Mammary epithelial cell (primary cell): ENCODE measurements at regions of chr9 and their contacts with region 1.

Region 1: DNA sequence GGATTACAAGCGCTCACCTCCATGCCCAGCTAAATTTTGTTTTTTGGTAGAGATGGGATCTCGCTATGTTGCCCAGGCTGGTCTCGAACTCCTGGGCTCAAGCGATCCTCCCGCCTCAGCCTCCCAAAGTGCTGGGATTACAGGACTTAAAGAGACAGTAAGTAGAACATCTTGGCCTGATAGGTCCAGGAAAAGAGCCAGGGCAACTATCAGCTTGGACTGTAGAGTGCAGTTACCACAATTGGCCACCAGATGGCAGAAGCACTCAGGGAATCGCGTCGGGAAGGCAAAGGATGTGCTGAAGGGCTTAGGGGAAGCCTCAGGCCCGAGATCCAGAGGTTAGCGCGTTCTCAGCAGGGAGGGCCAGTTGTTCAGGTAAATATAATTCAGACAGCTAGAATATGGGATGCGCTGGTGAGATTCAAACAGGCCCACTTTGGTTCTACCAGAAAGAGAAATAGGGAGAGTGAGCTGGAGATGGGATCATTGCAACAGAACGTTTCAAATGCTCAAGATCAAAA is 21.5 kb downstream of the C9orf57 start:
- DNase-seq: peak; percentile 71
- H3K4me3 ChIP-seq: no peak overlapping the region
- H3K27ac ChIP-seq: no peak overlapping the region
- H3K4me1 ChIP-seq: no peaks in the 10 kb centered on the region
- H3K27me3 ChIP-seq: no peaks in the 10 kb centered on the region
- CTCF ChIP-seq: peak; percentile 96

Region 2: GRCh38 chr9:71806901-71807307 is 232.0 kb before region 1 on chr9:
- CTCF ChIA-PET with region 1: no interaction called
- dilution Hi-C with region 1: no loop called
- in situ Hi-C with region 1: no loop called
- intact Hi-C with region 1: loop called (anchors 1 kb)
- DNase-seq: peak; percentile 64
- H3K4me3 ChIP-seq: no peak overlapping the region
- H3K27ac ChIP-seq: no peak overlapping the region
- H3K4me1 ChIP-seq: no peaks in the 10 kb centered on the region
- H3K27me3 ChIP-seq: no peaks in the 10 kb centered on the region
- CTCF ChIP-seq: peak; percentile 97 to 99

Region 3: DNA sequence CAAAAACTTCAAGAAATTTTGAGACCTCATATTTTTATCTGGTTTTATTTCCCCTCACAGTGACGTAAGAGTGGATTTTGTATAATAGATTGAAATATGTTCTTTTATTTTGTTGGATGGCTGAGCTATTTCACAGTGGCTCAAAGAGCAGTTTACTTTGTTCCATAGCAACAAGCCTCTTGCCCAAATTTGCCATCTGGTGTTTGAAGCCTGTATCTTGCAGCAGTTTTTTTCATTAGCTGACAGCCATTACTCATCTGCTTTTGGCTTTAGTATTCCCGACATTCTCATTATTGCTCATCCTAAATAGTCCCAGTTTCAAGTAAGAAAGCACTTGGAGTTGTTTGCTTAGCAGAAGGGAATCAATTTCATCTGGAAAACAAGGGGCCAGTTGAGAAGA is 146.6 kb after region 1 on chr9:
- CTCF ChIA-PET with region 1: no interaction called
- dilution Hi-C with region 1: no loop called
- in situ Hi-C with region 1: loop called in 1 of 2 experiments (anchors 10 kb)
- intact Hi-C with region 1: loop called (anchors 5 kb)
- DNase-seq: peak; percentile 41
- H3K4me3 ChIP-seq: no peak overlapping the region
- H3K27ac ChIP-seq: no peak overlapping the region
- H3K4me1 ChIP-seq: no peaks in the 10 kb centered on the region
- H3K27me3 ChIP-seq: no peaks in the 10 kb centered on the region
- CTCF ChIP-seq: peak in 1 of 2 donors; percentile 28

Region 4: GRCh38 chr9:72271613-72272478 is 232.9 kb after region 1 on chr9:
- CTCF ChIA-PET with region 1: interaction called, 3 read pairs
- dilution Hi-C with region 1: loop called (anchors 25 kb)
- in situ Hi-C with region 1: loop called (anchors 5 kb)
- intact Hi-C with region 1: loop called (anchors 1 kb)
- DNase-seq: peak; percentile 35
- H3K4me3 ChIP-seq: no peak overlapping the region
- H3K27ac ChIP-seq: no peak overlapping the region
- H3K4me1 ChIP-seq: peaks cover 14% of the 10 kb centered on the region
- H3K27me3 ChIP-seq: no peaks in the 10 kb centered on the region
- CTCF ChIP-seq: peak; percentile 77 to 86

Region 5: GRCh38 chr9:72753266-72753893 is 714.4 kb after region 1 on chr9:
- CTCF ChIA-PET with region 1: no interaction called
- dilution Hi-C with region 1: no loop called
- in situ Hi-C with region 1: no loop called
- intact Hi-C with region 1: loop called (anchors 1 kb)
- DNase-seq: no peak
- H3K4me3 ChIP-seq: no peak overlapping the region
- H3K27ac ChIP-seq: no peak overlapping the region
- H3K4me1 ChIP-seq: no peaks in the 10 kb centered on the region
- H3K27me3 ChIP-seq: peaks cover 2% of the 10 kb centered on the region
- CTCF ChIP-seq: peak; percentile 48 to 62